ENCODE measurements at regions of chr17 and their contacts with region 1.

Region 1: GRCh38 chr17:38702166-38702899 is 2.7 kb upstream of the MLLT6 start:
- DNase-seq: peak; percentile 77
- H3K4me3 ChIP-seq: peak overlapping the region; percentile 31 to 59 (median 47)
- H3K27ac ChIP-seq: peak overlapping the region; percentile 27
- H3K4me1 ChIP-seq: peaks cover 44% of the 10 kb centered on the region
- H3K27me3 ChIP-seq: peaks cover 0 to 2% of the 10 kb centered on the region in 2 experiments
- CTCF ChIP-seq: no peak
- POLR2A ChIP-seq: peak; percentile 44

Region 2: DNA sequence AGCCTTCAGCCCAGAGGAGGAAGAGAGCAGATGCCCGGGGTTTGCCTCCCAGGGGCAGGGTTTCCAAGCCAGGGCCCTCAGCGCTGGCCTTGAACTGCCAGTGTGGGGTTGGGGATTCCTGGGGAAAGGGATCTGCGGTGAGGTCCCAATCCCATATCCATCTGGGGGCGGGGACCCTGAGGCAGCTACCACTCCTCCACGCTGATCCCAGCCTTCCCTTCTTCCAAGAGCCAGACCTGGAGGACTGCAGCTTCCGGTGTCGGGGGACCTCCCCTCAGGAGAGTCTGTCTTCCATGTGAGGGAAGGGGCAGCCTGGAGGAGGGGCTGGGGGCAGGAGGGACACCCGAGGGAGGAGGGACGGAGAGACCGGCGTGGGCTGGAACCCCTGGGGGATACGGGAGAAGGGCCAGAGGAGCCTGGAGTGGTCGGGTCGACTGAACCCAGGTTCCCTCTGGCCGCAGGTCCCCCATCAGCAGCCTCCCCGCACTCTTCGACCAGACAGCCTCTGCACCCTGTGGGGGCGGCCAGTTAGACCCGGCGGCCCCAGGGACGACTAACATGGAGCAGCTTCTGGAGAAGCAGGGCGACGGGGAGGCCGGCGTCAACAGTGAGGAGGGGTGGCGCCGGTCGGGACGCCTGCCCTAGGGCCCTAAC is 17.1 kb after region 1 on chr17:
- CTCF ChIA-PET with region 1: interaction called, 16 read pairs
- POLR2A ChIA-PET with region 1: interaction called, 3 read pairs
- dilution Hi-C with region 1: no loop called
- intact Hi-C with region 1: no loop called
- DNase-seq: no peak
- H3K4me3 ChIP-seq: no peak overlapping the region
- H3K27ac ChIP-seq: no peak overlapping the region
- H3K4me1 ChIP-seq: peaks cover under 1% of the 10 kb centered on the region
- H3K27me3 ChIP-seq: no peaks in the 10 kb centered on the region
- CTCF ChIP-seq: no peak
- POLR2A ChIP-seq: no peak

Region 3: DNA sequence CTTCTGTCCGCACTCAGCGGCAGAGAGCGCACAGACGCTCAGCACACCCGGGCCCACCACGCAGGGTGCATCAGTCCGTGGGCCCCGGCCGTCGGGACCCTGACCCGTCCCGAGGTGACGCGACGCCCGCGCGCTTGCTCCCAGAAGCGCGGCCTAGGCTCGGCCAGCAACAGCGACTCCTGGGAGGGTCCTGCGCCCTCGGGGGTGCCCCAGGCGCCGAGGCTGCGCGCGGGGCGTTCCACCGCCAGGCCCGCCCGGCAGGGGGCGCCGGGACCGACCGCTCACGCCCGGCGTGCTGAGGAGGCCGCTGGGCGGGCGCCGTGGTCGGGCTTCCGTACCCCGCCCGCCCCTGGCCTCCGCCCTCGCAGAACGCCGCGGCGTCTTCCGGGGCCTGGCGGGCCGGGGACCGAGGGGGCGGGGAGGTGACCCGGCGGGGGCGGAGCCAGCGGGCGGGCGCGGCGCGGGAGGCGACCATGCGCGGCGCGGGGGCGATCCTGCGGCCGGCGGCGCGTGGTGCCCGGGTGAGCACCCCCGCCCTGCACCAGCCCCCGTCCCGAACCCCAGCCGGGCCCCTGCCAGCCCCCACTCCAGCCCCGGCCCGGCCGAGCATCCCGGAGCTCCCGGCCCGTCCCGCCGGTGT is 27.7 kb after region 1 on chr17 and contains the start of gene CISD3:
- CTCF ChIA-PET with region 1: interaction called, 26 read pairs
- POLR2A ChIA-PET with region 1: interaction called, 3 read pairs
- dilution Hi-C with region 1: no loop called
- intact Hi-C with region 1: loop called (anchors 1 kb)
- DNase-seq: peak; percentile 63
- H3K4me3 ChIP-seq: peak within 1 kb of the TSS; percentile 58 to 68 (median 64)
- H3K27ac ChIP-seq: peak within 1 kb of the TSS; percentile 25
- H3K4me1 ChIP-seq: peaks cover 27% of the 10 kb centered on the region
- H3K27me3 ChIP-seq: no peaks in the 10 kb centered on the region
- CTCF ChIP-seq: peak; percentile 62 to 77
- POLR2A ChIP-seq: peak; percentile 58
- total RNA-seq, gene CISD3: 22.6 and 23.7 TPM in 2 replicates